WTC11 (cell line): ENCODE measurements at regions of chr15 and their contacts with region 1.

Region 1: GRCh38 chr15:101288908-101289513 is 6.0 kb downstream of the SNRPA1 start:
- DNase-seq: no peak
- ATAC-seq: 0 out of 2 replicates have a peak, but pooled peaks have one; percentile 24
- H3K4me3 Mint-ChIP-seq: no peak overlapping the region
- H3K27ac Mint-ChIP-seq: no peak overlapping the region
- H3K4me1 Mint-ChIP-seq: peaks cover 10% of the 10 kb centered on the region
- H3K27me3 Mint-ChIP-seq: no peaks in the 10 kb centered on the region
- CTCF ChIP-seq: peak; percentile 64; the same call in 1 of the 2 replicates

Region 2: GRCh38 chr15:101099183-101099582 is 189.8 kb before region 1 on chr15:
- CTCF ChIA-PET with region 1: no interaction called
- POLR2A ChIA-PET with region 1: no interaction called
- DNase-seq: no peak
- ATAC-seq: no peak
- H3K4me3 Mint-ChIP-seq: no peak overlapping the region
- H3K27ac Mint-ChIP-seq: no peak overlapping the region
- H3K4me1 Mint-ChIP-seq: no peaks in the 10 kb centered on the region
- H3K27me3 Mint-ChIP-seq: peaks cover 2% of the 10 kb centered on the region; the same call in 1 of the 2 replicates
- CTCF ChIP-seq: no peak

Region 3: GRCh38 chr15:101333401-101333800 is 44.4 kb after region 1 on chr15:
- CTCF ChIA-PET with region 1: no interaction called
- POLR2A ChIA-PET with region 1: no interaction called
- DNase-seq: no peak
- ATAC-seq: no peak
- H3K4me3 Mint-ChIP-seq: no peak overlapping the region
- H3K27ac Mint-ChIP-seq: no peak overlapping the region
- H3K4me1 Mint-ChIP-seq: no peaks in the 10 kb centered on the region
- H3K27me3 Mint-ChIP-seq: peaks cover 60% of the 10 kb centered on the region
- CTCF ChIP-seq: no peak

Region 4: DNA sequence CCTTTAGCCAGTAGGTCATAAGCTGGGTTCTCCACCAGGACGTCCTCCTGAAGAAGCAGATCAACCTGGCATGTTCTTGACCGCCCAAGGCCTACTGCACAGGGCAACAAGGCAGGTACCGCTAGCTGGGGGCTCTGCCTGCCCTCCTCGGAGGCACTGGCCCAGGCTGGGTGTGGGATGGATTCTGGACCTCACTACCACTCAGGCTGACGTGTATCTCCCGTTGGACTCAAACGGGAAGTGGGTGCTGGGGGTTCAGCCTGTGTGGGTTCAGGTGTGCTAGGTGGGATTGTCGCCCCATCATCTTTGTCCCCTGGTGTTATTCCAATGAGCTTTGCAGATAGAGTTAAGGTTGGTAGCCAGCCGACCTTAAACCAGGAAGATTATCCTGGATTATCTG is 101.0 kb after region 1 on chr15:
- CTCF ChIA-PET with region 1: no interaction called
- POLR2A ChIA-PET with region 1: no interaction called
- DNase-seq: no peak
- ATAC-seq: no peak
- H3K4me3 Mint-ChIP-seq: no peak overlapping the region
- H3K27ac Mint-ChIP-seq: no peak overlapping the region
- H3K4me1 Mint-ChIP-seq: no peaks in the 10 kb centered on the region
- H3K27me3 Mint-ChIP-seq: no peaks in the 10 kb centered on the region
- CTCF ChIP-seq: no peak

Region 5: GRCh38 chr15:101654171-101654570 is 365.2 kb after region 1 on chr15:
- CTCF ChIA-PET with region 1: interaction called, 15 read pairs
- POLR2A ChIA-PET with region 1: no interaction called
- DNase-seq: no peak
- ATAC-seq: no peak
- H3K4me3 Mint-ChIP-seq: peak overlapping the region; percentile 29; the same call in 1 of the 2 replicates
- H3K27ac Mint-ChIP-seq: no peak overlapping the region
- H3K4me1 Mint-ChIP-seq: peaks cover 11% of the 10 kb centered on the region
- H3K27me3 Mint-ChIP-seq: no peaks in the 10 kb centered on the region
- CTCF ChIP-seq: no peak